ENCODE measurements at regions of chr1 and their contacts with region 1.

Region 1: DNA sequence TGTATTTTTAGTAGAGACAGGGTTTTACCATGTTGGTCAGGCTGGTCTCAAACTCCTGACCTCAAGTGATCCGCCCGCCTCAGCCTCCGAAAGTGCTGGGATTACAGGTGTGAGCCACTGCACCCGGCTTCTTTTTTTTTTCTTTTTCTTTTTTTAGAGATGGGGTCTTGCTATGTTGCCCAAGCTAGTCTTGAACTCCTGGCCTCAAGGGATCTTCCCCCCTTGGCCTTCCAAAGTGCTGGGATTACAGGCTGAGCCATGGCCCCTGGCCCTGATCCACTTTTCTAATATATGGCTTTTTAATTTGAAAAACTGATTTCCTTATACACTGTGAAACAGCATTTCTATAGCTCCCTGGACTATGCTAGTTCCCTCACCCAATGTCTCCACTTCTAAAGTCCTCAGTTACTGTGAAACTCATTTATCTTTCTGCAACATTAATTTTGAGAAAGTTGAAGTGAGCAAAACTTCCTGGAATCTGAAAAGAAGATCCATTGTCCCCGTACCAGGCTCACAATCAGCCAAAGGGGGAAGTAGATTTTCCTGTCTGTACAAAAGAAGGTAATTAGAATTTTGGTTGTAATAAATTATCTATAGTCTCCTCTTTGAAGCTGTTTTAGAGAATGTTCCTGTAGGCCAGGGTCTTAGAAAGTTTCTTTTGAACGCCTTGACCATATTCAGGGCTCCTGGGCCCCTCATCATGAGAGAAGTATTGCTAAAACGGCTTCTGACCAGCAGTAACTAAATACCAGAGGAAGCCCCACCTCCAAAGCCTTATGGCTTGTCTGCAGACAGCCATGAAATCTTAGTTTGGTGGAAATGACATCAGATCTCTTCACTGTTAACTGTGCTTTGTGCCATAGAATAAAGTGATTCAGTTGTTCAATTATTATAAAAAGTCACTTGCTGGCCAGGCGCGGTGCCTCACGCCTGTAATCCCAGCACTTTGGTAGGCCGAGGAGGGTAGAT is 34.9 kb downstream of the DEGS1 start:
- DNase-seq: no peak
- ATAC-seq: peak; percentile 48; the same call in 1 of the 2 replicates
- H3K4me3 ChIP-seq: no peak overlapping the region
- H3K27ac ChIP-seq: no peak overlapping the region
- H3K4me1 ChIP-seq: no peaks in the 10 kb centered on the region
- H3K27me3 ChIP-seq: no peaks in the 10 kb centered on the region
- CTCF ChIP-seq: no peak
- POLR2A ChIP-seq: no peak
- RAD21 ChIP-seq: no peak

Region 2: DNA sequence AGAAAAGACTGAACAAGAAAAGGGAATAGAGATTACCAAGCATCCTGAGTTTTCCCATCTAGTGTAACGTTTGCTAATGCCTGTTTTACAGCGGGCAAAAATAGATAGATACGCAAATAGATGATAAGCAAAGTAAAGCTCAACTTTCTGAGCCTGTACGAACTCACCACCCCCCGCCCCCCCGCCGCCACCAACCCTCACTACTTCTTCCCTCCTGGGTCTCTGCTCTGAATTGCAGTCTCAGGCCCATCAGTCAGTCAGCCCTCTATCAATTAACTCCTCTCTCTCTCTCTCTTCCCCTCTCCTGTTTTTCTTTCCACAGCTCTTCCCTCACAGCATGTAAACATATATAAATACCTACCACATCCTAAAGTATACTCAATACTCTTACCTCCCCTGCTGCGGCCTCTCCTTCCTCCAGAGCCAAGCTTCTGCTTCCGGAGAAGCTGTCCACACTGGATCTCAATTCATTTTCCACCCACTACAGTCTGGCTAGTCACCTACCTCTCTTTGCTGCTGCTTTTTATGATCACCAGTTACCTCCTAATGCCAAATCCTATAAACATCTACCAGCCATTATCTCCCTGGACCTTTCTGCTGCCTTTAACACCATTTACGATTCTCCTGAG is 441.0 kb before region 1 on chr1:
- CTCF ChIA-PET with region 1: no interaction called
- POLR2A ChIA-PET with region 1: no interaction called
- dilution Hi-C with region 1: no loop called
- in situ Hi-C with region 1: no loop called
- intact Hi-C with region 1: no loop called
- DNase-seq: no peak
- ATAC-seq: no peak
- H3K4me3 ChIP-seq: no peak overlapping the region
- H3K27ac ChIP-seq: peak overlapping the region; percentile 27; the same call in 1 of the 2 replicates
- H3K4me1 ChIP-seq: peaks cover 12% of the 10 kb centered on the region
- H3K27me3 ChIP-seq: no peaks in the 10 kb centered on the region
- CTCF ChIP-seq: no peak
- POLR2A ChIP-seq: no peak
- RAD21 ChIP-seq: no peak

Region 3: DNA sequence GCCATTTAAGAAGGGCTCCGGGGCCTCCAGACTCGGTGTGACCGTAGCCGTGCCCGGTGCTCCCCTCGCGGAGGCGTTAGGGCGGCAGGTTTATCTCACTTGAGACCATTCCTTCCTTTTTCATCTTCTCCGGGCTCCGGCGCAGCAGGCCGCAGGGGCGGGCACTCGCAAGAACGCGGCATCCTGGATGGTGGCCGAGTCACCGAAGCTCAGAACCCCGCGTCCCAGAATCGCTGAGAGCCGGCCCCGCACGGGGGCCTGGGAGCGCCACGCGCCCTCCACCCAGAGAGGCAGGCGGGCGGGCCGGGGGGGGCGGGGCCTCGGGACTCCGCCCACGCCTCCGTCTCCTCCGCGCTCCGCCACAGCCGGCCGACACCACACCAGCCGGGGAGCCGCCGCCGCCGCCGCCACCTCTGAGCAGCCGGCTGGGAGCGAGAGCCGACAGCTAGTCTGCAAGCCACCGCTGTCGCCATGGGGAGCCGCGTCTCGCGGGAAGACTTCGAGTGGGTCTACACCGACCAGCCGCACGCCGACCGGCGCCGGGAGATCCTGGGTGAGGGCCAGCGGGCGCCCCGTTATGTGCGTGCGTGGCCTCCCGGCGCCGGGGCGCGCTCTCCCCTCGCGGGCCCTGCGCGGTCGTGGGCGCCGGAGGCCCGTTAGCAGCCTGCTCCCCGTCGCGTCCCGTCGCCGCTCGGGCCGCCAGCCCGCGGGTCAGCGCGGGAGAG is 34.9 kb before region 1 on chr1 and contains the start of gene DEGS1:
- CTCF ChIA-PET with region 1: no interaction called
- POLR2A ChIA-PET with region 1: no interaction called
- dilution Hi-C with region 1: no loop called
- in situ Hi-C with region 1: no loop called
- intact Hi-C with region 1: loop called (anchors 2 kb)
- DNase-seq: peak; percentile 73
- ATAC-seq: peak; percentile 94
- H3K4me3 ChIP-seq: peak within 1 kb of the TSS; percentile 98
- H3K27ac ChIP-seq: peak within 1 kb of the TSS; percentile 96
- H3K4me1 ChIP-seq: 0 out of 2 replicates have a peak, but pooled peaks cover 4% of the 10 kb centered on the region
- H3K27me3 ChIP-seq: no peaks in the 10 kb centered on the region
- CTCF ChIP-seq: no peak
- POLR2A ChIP-seq: peak; percentile 83
- RAD21 ChIP-seq: no peak
- total RNA-seq, gene DEGS1: 54.8 and 123 TPM in 2 replicates

Region 4: DNA sequence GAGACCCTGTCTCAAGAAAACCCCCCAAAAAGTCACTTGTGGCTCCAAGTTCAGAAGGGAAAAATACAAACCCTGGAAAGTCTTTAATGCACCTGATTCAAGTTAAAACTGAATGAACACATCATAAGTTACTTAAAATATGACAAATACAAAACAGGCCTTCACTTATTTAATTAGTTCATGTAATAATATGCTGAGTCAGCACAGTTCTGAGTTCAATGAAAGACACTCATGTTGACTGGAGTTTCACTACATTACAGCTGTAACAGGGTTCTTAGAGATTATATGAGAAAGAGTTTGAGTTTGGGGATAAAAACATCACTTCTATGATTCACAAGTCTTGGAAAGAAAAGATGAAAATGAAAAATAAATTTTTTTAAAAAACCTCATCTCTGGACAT is 16.1 kb after region 1 on chr1:
- CTCF ChIA-PET with region 1: no interaction called
- POLR2A ChIA-PET with region 1: no interaction called
- dilution Hi-C with region 1: no loop called
- in situ Hi-C with region 1: no loop called
- intact Hi-C with region 1: no loop called
- DNase-seq: no peak
- ATAC-seq: no peak
- H3K4me3 ChIP-seq: no peak overlapping the region
- H3K27ac ChIP-seq: no peak overlapping the region
- H3K4me1 ChIP-seq: no peaks in the 10 kb centered on the region
- H3K27me3 ChIP-seq: no peaks in the 10 kb centered on the region
- CTCF ChIP-seq: no peak
- POLR2A ChIP-seq: no peak
- RAD21 ChIP-seq: no peak

Region 5: GRCh38 chr1:224411766-224412165 is 193.8 kb after region 1 on chr1:
- CTCF ChIA-PET with region 1: no interaction called
- POLR2A ChIA-PET with region 1: no interaction called
- dilution Hi-C with region 1: no loop called
- in situ Hi-C with region 1: no loop called
- intact Hi-C with region 1: no loop called
- DNase-seq: peak; percentile 37
- ATAC-seq: peak; percentile 74
- H3K4me3 ChIP-seq: no peak overlapping the region
- H3K27ac ChIP-seq: no peak overlapping the region
- H3K4me1 ChIP-seq: peaks cover under 1% of the 10 kb centered on the region; the same call in 1 of the 2 replicates
- H3K27me3 ChIP-seq: no peaks in the 10 kb centered on the region
- CTCF ChIP-seq: no peak
- POLR2A ChIP-seq: no peak
- RAD21 ChIP-seq: no peak

Measured in IMR-90 (cell line).